ENCODE measurements at regions of chr2 and their contacts with region 1.

Region 1: DNA sequence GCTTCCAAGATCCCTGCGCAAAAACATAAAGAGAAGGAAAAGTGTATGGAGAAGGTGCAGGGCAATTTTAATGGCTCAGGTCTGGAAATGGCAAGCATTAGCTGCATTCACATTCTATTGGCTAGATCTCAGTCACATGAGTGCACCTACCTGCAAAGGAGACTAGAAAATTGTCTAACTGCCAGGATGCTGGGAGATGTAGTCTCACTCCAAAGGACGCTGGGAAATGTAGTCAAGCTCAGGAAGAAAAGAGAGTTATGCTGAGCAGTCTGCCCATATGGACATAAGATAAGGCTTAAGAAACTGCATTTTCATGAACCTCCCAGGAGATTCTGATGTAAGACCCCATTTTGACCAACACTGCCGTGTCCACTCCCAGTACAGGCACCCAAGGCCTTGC is 9.5 kb upstream of the KLHL29 start:
- DNase-seq: peak in 1 of 9 experiments; percentile 31
- ATAC-seq: peak; percentile 38
- H3K4me3 ChIP-seq: no peak overlapping the region
- H3K4me3 Mint-ChIP-seq: no peak overlapping the region
- H3K27ac ChIP-seq: no peak overlapping the region
- H3K27ac Mint-ChIP-seq: no peak overlapping the region
- H3K4me1 ChIP-seq: peaks cover 3% of the 10 kb centered on the region
- H3K4me1 Mint-ChIP-seq: peaks cover 4% of the 10 kb centered on the region
- H3K27me3 ChIP-seq: peaks cover 0 to 2% of the 10 kb centered on the region in 2 experiments
- H3K27me3 Mint-ChIP-seq: peaks cover 7% of the 10 kb centered on the region
- CTCF ChIP-seq: no peak

Region 2: GRCh38 chr2:23532391-23533337 is 157.2 kb after region 1 on chr2:
- CTCF ChIA-PET with region 1: no interaction called
- POLR2A ChIA-PET with region 1: no interaction called
- intact Hi-C with region 1: loop called in 1 of 2 experiments (anchors 5 kb)
- DNase-seq: peak in 8 of 9 experiments; percentile 14 to 68 (median 38)
- ATAC-seq: peak; percentile 71
- H3K4me3 ChIP-seq: peak overlapping the region; percentile 35 to 68
- H3K4me3 Mint-ChIP-seq: peak overlapping the region; percentile 88
- H3K27ac ChIP-seq: peak overlapping the region; percentile 49 to 55
- H3K27ac Mint-ChIP-seq: peak overlapping the region; percentile 96
- H3K4me1 ChIP-seq: peaks cover 50% of the 10 kb centered on the region
- H3K4me1 Mint-ChIP-seq: peaks cover 47% of the 10 kb centered on the region
- H3K27me3 ChIP-seq: no peaks in the 10 kb centered on the region
- H3K27me3 Mint-ChIP-seq: no peaks in the 10 kb centered on the region
- CTCF ChIP-seq: no peak

Measured in CD8-positive, alpha-beta T cell (primary cell).